Calu3 (cell line): ENCODE measurements at regions of chr5 and their contacts with region 1.

Region 1: GRCh38 chr5:130871346-130872086 is 293.5 kb downstream of the HINT1 start:
- DNase-seq: peak; percentile 62
- H3K4me3 Mint-ChIP-seq: no peak overlapping the region
- H3K27ac Mint-ChIP-seq: no peak overlapping the region
- H3K4me1 Mint-ChIP-seq: no peaks in the 10 kb centered on the region
- H3K27me3 Mint-ChIP-seq: no peaks in the 10 kb centered on the region
- CTCF ChIP-seq: peak; percentile 80

Region 2: GRCh38 chr5:130514984-130515690 is 356.4 kb before region 1 on chr5:
- CTCF ChIA-PET with region 1: no interaction called
- intact Hi-C with region 1: no loop called
- DNase-seq: no peak
- H3K4me3 Mint-ChIP-seq: no peak overlapping the region
- H3K27ac Mint-ChIP-seq: peak overlapping the region; percentile 27
- H3K4me1 Mint-ChIP-seq: peaks cover 35% of the 10 kb centered on the region
- H3K27me3 Mint-ChIP-seq: no peaks in the 10 kb centered on the region
- CTCF ChIP-seq: no peak

Region 3: GRCh38 chr5:130912088-130912487 is 40.6 kb after region 1 on chr5:
- CTCF ChIA-PET with region 1: no interaction called
- intact Hi-C with region 1: loop called (anchors 5 kb)
- DNase-seq: no peak
- H3K4me3 Mint-ChIP-seq: no peak overlapping the region
- H3K27ac Mint-ChIP-seq: no peak overlapping the region
- H3K4me1 Mint-ChIP-seq: no peaks in the 10 kb centered on the region
- H3K27me3 Mint-ChIP-seq: no peaks in the 10 kb centered on the region
- CTCF ChIP-seq: no peak

Region 4: GRCh38 chr5:131019111-131019974 is 147.8 kb after region 1 on chr5:
- CTCF ChIA-PET with region 1: no interaction called
- intact Hi-C with region 1: loop called (anchors 10 kb)
- DNase-seq: peak; percentile 21
- H3K4me3 Mint-ChIP-seq: no peak overlapping the region
- H3K27ac Mint-ChIP-seq: no peak overlapping the region
- H3K4me1 Mint-ChIP-seq: peaks cover 8% of the 10 kb centered on the region
- H3K27me3 Mint-ChIP-seq: no peaks in the 10 kb centered on the region
- CTCF ChIP-seq: no peak

Region 5: DNA sequence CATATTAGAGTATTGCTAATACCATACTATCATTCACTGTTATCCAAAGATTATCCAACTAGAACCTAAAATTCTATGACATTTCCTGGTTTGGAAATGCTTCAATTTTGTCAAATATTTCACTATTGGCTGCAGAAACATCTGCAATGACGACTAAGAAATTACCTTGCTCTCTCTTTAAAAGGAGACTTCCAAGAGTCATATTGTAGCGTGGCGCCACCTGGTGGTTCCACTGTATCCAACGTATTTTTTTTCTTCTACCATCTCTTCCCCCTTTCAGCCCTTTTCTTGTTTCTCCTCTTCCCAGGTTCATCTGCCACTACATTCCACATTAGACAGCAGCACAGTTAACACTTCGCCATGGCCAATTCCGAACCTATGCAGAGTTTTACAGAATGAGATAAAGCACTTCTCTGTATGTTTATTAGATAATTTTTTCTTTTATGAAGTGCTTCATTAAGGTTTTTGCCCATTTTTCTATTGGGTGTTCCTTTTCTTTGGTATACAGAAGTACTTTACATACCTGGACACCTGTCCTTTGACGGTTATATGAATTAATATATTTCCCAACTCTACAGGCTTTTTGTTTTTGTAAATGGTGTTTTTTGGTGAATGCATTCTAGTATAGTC is 545.8 kb after region 1 on chr5:
- CTCF ChIA-PET with region 1: no interaction called
- intact Hi-C with region 1: loop called (anchors 2 kb)
- DNase-seq: peak; percentile 86
- H3K4me3 Mint-ChIP-seq: no peak overlapping the region
- H3K27ac Mint-ChIP-seq: peak overlapping the region; percentile 42
- H3K4me1 Mint-ChIP-seq: no peaks in the 10 kb centered on the region
- H3K27me3 Mint-ChIP-seq: no peaks in the 10 kb centered on the region
- CTCF ChIP-seq: peak; percentile 80